Posterior vena cava (tissue), 2 donors: ENCODE measurements at regions of chr1 and their contacts with region 1.

Region 1: DNA sequence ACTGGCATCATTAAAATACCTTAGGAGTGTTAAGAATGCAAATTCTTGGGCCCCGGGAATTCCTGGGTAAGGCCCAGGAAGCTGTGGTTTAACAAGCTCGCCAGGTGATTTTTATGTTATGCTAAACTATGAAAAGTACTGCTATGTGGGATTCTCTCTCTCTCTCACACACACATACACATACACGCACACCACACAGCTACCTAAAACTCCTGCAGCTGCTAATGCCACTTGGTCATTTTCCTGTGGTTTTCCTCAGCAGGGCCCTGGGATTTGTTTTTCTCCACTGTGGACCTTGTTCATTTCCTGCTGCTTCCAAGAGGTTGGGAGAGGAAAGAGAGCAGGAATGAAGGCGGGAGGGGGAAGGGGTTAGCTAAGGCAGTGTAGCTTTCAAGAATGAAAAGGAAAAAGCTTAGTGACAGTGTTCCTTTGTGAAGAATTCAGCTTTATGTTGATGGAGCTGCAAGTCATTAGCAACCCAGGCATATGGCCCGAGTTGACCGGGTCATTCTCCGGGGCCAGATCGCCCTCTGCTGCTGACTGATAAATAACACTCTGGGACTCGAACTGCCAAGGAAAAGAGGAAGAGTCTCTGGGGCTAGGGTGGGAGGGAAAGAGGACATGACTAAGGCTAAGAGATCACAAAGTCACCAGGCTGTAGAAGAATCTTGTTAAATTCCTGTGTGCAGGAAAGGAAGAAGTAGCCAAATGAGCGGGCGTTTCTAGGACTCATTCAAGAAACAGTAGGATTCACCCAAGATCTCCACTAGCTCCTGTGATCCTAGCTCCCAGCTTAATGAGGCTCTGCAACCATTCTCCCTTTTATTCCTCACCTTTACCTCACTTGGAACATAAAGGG is 30.5 kb upstream of the LRIG2 start:
- DNase-seq: peak; percentile 93

Region 2: GRCh38 chr1:111062081-111062480 is 1980.4 kb before region 1 on chr1:
- intact Hi-C with region 1: no loop called
- DNase-seq: no peak

Region 3: GRCh38 chr1:112715264-112716053 is 327.1 kb before region 1 on chr1 and contains the start of gene PPM1J:
- intact Hi-C with region 1: loop called (anchors 10 kb)
- DNase-seq: peak; percentile 99
- total RNA-seq, gene PPM1J: 2.1 to 3.0 TPM

Region 4: DNA sequence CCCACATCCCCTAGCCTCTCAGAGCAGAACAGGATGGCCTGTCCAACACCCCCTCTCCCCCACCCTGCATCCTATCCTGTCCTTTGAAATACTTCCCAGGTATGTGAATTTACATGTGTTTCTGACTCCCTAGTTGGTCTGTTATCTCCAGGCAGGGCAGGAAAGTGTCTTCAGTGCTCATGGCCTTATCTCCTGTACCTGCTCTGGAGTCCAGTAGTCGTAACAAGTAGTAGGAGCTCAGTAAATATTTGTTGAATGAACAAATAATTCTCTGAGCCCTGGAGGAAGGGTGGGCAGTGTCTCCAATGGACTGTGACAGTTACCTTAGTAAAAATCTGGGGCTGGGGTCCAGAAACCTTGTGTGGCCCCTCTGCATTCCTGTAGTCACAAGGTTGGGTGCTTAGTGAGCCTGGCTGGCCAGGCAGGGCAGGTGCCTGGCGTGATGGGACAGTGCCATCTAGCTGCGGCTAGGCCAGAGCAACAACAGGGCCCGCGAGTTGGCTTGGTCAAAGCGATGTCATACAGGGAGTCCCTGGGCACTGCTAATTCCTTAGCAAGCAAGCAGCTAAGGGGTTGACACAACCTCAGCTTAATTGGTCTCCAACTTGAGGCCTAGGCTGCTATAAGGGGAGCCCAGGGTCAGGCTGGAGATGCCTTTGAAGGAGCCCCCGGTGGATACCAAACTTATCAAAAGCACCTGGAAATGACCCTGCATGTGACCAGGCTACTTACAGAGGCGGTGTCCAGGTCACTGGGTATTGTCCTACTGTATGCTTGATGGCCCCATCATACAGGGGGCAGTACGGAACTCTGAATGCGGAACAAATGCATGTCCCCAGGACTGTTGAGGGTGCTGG is 238.4 kb before region 1 on chr1:
- intact Hi-C with region 1: loop called in 1 of 2 experiments (anchors 10 kb)
- DNase-seq: no peak

Region 5: GRCh38 chr1:112882271-112882744 is 160.2 kb before region 1 on chr1:
- intact Hi-C with region 1: loop called (anchors 5 kb)
- DNase-seq: no peak

Region 6: DNA sequence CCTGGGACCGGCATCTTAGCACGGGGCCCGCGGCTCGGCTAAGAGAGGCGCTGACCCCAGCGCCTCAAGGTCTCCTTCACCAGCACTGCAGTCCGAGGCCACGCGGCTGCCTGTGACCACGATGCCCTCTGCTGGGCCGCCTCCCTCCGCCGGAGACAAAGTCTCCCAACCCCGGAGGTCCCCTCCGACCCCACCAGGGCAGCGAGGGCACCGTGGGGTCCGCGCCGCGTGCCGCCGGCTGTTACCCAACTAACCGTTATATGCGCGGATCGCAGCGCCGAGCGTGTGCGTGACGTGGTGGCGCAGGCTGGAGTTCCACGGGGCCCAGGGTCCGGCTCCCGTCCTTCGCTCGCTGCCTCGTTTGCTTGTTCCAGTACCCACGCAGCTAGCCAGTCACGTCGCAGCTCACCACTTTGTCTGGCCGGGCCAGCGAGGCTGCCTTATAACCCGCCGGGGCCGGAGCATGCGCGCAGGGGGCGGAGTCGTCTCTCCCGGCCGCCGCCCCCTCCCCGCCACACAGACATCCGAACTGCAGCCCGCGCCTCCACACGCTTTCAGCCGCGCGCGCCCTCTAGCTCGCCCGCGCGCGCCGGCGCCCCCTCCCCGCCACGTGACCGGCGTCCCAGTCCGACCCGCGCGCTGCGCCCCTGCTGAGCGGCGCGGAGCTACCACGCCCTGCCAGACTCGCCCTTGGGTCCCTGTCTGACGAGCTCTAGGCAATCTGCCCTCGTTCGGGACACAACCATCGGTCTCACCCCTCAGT is 86.6 kb before region 1 on chr1 and contains the start of gene SLC16A1:
- intact Hi-C with region 1: loop called in 1 of 2 experiments (anchors 5 kb)
- DNase-seq: peak; percentile 98
- total RNA-seq, gene SLC16A1: 34.0 to 39.7 TPM